Right lobe of liver (tissue), 6 donors: ENCODE measurements at regions of chr18 and their contacts with region 1.

Region 1: DNA sequence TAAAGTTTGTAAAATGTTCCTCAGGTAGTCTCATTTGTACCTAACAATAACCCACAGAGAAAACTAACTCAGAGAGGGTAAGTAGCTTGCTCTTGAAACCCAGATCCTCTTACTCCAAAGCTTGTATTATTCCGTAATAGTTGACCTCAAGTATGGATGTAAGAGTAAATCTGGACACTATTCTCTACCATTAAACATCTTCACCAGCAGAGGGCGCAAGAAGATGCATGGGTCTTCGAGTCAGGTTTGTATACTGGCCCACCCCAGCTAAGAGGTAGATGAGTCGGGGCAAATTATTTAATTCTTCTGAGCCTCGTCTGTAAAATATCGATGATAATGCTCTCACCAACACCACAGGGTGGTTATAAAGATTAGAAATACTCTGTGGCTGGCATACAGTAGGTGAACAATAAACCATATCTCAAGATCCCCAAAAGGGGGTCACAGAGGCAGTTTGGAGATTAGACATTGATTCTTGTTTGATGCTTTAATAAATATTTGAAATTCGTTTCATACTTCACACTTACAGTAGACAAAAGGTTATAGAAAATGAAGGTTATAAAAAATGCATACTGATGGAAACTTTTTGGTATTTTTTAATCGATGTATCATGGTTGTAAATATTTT is 3.5 kb upstream of the CABLES1 start:
- DNase-seq: peak in 1 of 3 donors; percentile 63
- ATAC-seq: peak; percentile 26 to 47 (median 32)
- H3K4me3 ChIP-seq: no peak overlapping the region
- H3K27ac ChIP-seq: no peak overlapping the region
- H3K4me1 ChIP-seq: peaks cover 0 to 24% (median 5%) of the 10 kb centered on the region in 4 donors
- H3K27me3 ChIP-seq: no peaks in the 10 kb centered on the region
- CTCF ChIP-seq: peak; percentile 75 to 78 (median 77)
- POLR2A ChIP-seq: no peak

Region 2: GRCh38 chr18:23194155-23194996 is 62.6 kb after region 1 on chr18:
- intact Hi-C with region 1: loop called (anchors 5 kb)
- DNase-seq: peak; percentile 63 to 74 (median 71)
- ATAC-seq: peak; percentile 66 to 74 (median 70)
- H3K4me3 ChIP-seq: peak overlapping the region in 2 of 3 donors; percentile 25 to 26
- H3K27ac ChIP-seq: peak overlapping the region; percentile 41 to 74 (median 42)
- H3K4me1 ChIP-seq: peaks cover 0 to 46% (median 10%) of the 10 kb centered on the region in 4 donors
- H3K27me3 ChIP-seq: no peaks in the 10 kb centered on the region
- CTCF ChIP-seq: no peak
- POLR2A ChIP-seq: no peak

Region 3: GRCh38 chr18:23231340-23232021 is 99.7 kb after region 1 on chr18:
- intact Hi-C with region 1: loop called in 1 of 2 experiments (anchors 10 kb)
- DNase-seq: peak in 1 of 3 donors; percentile 26
- ATAC-seq: peak; percentile 63 to 74 (median 70)
- H3K4me3 ChIP-seq: no peak overlapping the region
- H3K27ac ChIP-seq: peak overlapping the region; percentile 37 to 53 (median 43)
- H3K4me1 ChIP-seq: peaks cover 0 to 7% (median 0%) of the 10 kb centered on the region in 4 donors
- H3K27me3 ChIP-seq: no peaks in the 10 kb centered on the region
- CTCF ChIP-seq: no peak
- POLR2A ChIP-seq: no peak

Region 4: GRCh38 chr18:23356915-23357601 is 225.3 kb after region 1 on chr18:
- intact Hi-C with region 1: loop called (anchors 5 to 10 kb)
- DNase-seq: no peak
- ATAC-seq: peak; percentile 42 to 65 (median 55)
- H3K4me3 ChIP-seq: peak overlapping the region in 1 of 3 donors; percentile 17
- H3K27ac ChIP-seq: peak overlapping the region; percentile 64 to 72 (median 64)
- H3K4me1 ChIP-seq: peaks cover 0 to 37% (median 13%) of the 10 kb centered on the region in 4 donors
- H3K27me3 ChIP-seq: no peaks in the 10 kb centered on the region
- CTCF ChIP-seq: no peak
- POLR2A ChIP-seq: no peak